Activated CD8-positive, alpha-beta T cell treated with anti-CD3 and anti-CD28 coated beads, Interleukin-2, amount 10 ng/mL, durations not matched to agents 7 days and 5 days (primary cell): ENCODE measurements at regions of chr2 and their contacts with region 1.

Region 1: GRCh38 chr2:170815746-170816503 is 762 bp upstream of the GAD1 start:
- DNase-seq: peak; percentile 77
- ATAC-seq: peak; percentile 50
- H3K4me3 Mint-ChIP-seq: peak overlapping the region; percentile 77
- H3K27ac Mint-ChIP-seq: no peak overlapping the region
- H3K4me1 Mint-ChIP-seq: peaks cover 53% of the 10 kb centered on the region
- H3K27me3 Mint-ChIP-seq: peaks cover 85% of the 10 kb centered on the region

Region 2: GRCh38 chr2:170235860-170236679 is 579.9 kb before region 1 on chr2:
- CTCF ChIA-PET with region 1: interaction called, 11 read pairs
- POLR2A ChIA-PET with region 1: no interaction called
- DNase-seq: peak; percentile 36
- ATAC-seq: no peak
- H3K4me3 Mint-ChIP-seq: no peak overlapping the region
- H3K27ac Mint-ChIP-seq: no peak overlapping the region
- H3K4me1 Mint-ChIP-seq: no peaks in the 10 kb centered on the region
- H3K27me3 Mint-ChIP-seq: peaks cover 27% of the 10 kb centered on the region

Region 3: GRCh38 chr2:170361090-170361936 is 454.6 kb before region 1 on chr2:
- CTCF ChIA-PET with region 1: interaction called, 93 read pairs
- POLR2A ChIA-PET with region 1: no interaction called
- DNase-seq: peak; percentile 79
- ATAC-seq: peak; percentile 88
- H3K4me3 Mint-ChIP-seq: peak overlapping the region; percentile 1
- H3K27ac Mint-ChIP-seq: peak overlapping the region; percentile 68
- H3K4me1 Mint-ChIP-seq: peaks cover 36% of the 10 kb centered on the region
- H3K27me3 Mint-ChIP-seq: peaks cover 14% of the 10 kb centered on the region

Region 4: DNA sequence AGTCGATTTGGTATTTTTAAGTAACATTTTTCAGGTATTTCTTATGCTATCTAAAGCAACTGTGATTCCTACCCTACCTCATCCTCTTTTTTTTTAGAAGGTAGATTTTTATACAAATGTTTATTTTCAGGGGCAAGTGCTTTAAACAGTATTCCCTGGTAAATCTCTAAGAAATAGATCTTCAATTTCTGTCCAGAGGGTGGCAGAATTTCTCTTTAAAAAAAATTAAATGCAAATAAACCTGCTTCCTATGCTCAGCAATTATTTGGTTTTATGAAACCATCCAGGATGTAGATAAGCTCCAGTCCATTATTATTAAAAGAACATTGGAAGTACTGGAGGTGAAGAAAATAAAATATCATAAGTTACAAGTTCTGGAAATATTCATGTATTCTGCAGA is 446.0 kb before region 1 on chr2:
- CTCF ChIA-PET with region 1: interaction called, 93 read pairs
- POLR2A ChIA-PET with region 1: interaction called, 5 read pairs
- DNase-seq: no peak
- ATAC-seq: no peak
- H3K4me3 Mint-ChIP-seq: no peak overlapping the region
- H3K27ac Mint-ChIP-seq: no peak overlapping the region
- H3K4me1 Mint-ChIP-seq: peaks cover 56% of the 10 kb centered on the region
- H3K27me3 Mint-ChIP-seq: peaks cover 18% of the 10 kb centered on the region

Region 5: GRCh38 chr2:170695521-170696410 is 120.2 kb before region 1 on chr2:
- CTCF ChIA-PET with region 1: no interaction called
- POLR2A ChIA-PET with region 1: no interaction called
- DNase-seq: no peak
- ATAC-seq: no peak
- H3K4me3 Mint-ChIP-seq: no peak overlapping the region
- H3K27ac Mint-ChIP-seq: no peak overlapping the region
- H3K4me1 Mint-ChIP-seq: no peaks in the 10 kb centered on the region
- H3K27me3 Mint-ChIP-seq: peaks cover 7% of the 10 kb centered on the region